GM18951 (cell line): ENCODE measurements at regions of chr14 and their contacts with region 1.

Region 1: DNA sequence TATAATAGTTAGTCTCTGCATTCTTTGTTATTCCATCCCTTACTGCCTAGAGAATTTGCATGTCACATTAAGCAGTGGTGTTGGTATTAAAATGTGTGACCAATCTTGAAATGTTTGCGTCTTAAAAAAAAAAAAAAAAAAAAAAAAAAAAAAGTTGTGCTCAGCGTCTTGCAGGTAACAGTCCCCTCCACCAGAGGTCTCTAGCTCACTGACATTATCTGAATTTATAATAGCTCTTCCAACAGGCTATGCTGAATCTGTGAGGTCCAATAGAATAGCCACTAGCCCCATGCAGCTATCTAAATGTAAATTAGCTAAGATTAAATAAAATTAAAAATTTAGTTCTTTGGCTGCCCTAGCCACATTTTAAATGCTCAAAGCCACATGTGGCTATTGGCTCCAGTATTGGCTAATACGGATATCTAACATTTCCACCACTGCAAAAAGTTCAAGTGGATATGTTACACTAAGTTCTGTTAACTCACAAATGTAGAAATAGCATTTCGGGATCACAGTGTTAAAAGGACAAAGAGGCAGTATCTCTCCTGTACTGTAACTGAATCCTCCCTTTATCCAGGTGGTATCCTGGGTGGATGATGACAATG is 28.7 kb downstream of the NKX2-8 start:
- POLR2A ChIP-seq: no peak

Region 2: DNA sequence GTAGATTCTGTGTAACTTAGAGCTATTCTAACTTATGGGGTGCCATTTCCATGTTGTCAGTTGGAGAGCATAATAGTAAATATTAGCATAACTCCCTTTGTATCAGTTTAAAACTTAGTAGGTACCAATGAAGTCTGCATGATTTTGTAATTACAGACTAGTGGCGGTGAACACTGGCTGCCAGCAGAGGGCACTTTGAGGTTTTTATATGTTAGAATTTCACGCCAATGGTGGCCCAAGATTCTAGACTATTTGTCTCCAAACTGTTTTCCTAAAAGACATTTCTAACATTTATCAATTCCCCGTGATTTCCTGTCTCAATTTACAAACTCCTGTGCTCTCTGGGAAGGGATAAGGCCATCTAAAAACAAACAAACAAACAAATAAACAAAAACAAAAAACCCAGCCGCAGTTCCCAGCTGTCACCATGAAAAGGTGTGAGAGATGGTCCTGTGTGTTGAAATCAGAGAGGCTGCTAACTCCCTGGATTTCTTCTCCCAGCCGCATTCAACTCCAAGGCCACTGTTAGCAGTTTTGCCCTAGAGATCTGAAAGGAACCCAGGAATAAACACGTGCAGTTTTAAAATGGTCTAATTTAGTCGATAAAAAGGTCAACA is 670.0 kb before region 1 on chr14:
- in situ Hi-C with region 1: loop called (anchors 25 kb)
- POLR2A ChIP-seq: no peak

Region 3: GRCh38 chr14:36634248-36634647 is 80.5 kb after region 1 on chr14:
- in situ Hi-C with region 1: no loop called
- POLR2A ChIP-seq: no peak

Region 4: DNA sequence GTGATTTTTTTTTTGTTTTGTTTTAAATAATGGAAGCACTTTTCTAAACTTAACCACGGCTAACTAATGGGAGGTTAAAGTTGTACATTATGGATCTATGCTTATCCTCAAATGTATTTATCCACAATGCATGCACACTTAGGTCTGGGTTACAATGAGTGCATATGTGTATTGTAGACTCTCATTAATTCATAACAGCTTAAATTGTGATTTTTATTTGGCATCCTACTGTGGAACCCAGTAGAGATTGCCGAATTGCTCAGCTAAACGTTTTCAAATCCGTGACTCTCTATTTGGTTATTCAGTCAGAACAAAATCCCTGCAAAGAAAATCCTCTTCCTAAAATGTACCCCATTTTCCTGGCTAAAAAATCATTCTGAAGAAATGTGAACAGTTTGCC is 374.7 kb after region 1 on chr14:
- in situ Hi-C with region 1: no loop called
- POLR2A ChIP-seq: no peak